T-cell (primary cell): ENCODE measurements at regions of chr12 and their contacts with region 1.

Region 1: DNA sequence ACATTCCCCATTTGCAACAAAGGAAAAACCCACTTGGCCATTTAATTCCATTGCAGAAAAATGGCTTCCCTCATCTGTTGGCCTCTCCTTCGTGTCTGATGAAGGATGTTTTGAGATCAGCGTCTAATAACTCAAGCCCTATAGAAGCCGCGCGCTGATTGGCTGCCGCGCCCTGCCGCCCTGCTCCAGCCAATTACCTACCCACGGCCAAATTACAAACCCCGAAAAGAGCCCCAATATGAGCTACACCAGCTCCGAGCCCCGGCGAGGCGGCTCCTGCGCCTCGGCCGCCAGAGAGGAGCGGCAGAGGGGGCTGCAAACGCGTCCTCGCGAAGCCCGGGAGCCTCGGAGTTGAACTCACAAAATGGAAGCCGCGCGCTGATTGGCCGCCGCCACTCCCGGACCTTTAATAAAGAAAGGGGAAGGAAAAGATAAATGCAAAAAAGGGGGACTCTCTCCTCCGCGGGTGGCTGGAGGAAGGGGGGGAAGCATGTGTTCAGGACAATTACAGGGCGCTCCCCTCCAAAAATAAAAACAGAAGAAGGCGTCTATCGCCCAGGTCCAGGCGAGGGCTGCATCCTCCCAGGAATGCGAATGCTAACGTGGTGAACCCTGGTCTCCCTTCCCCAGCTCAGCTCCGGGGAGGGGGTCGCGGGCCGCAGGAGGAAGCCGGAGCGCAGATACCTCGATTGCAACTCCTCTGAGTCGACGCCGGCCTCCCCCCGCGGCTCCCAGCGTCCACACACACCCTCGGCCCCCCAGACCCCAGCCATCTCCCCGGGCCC is 771 bp upstream of the SETD1B start:
- DNase-seq: peak; percentile 81 to 94 (median 87)
- ATAC-seq: peak; percentile 45 to 57 (median 52)
- H3K4me3 ChIP-seq: peak overlapping the region; percentile 92 to 97
- H3K4me3 Mint-ChIP-seq: peak overlapping the region; percentile 93 to 98 (median 96)
- H3K27ac ChIP-seq: peak overlapping the region; percentile 96
- H3K27ac Mint-ChIP-seq: peak overlapping the region; percentile 96 to 98
- H3K4me1 ChIP-seq: peaks cover 27 to 52% of the 10 kb centered on the region in 2 experiments
- H3K4me1 Mint-ChIP-seq: peaks cover 25 to 47% (median 40%) of the 10 kb centered on the region in 3 donors
- H3K27me3 ChIP-seq: no peaks in the 10 kb centered on the region
- H3K27me3 Mint-ChIP-seq: no peaks in the 10 kb centered on the region

Region 2: GRCh38 chr12:121038861-121039666 is 764.0 kb before region 1 on chr12 and contains the start of gene OASL:
- CTCF ChIA-PET with region 1: no interaction called
- POLR2A ChIA-PET with region 1: no interaction called
- DNase-seq: peak; percentile 23 to 77 (median 54)
- ATAC-seq: peak; percentile 66 to 78 (median 68)
- H3K4me3 ChIP-seq: peak within 1 kb of the TSS; percentile 83 to 90
- H3K4me3 Mint-ChIP-seq: peak within 1 kb of the TSS; percentile 93 to 98 (median 98)
- H3K27ac ChIP-seq: peak within 1 kb of the TSS; percentile 87
- H3K27ac Mint-ChIP-seq: peak within 1 kb of the TSS; percentile 94 to 96
- H3K4me1 ChIP-seq: peaks cover 7 to 56% of the 10 kb centered on the region in 2 experiments
- H3K4me1 Mint-ChIP-seq: peaks cover 44 to 51% (median 45%) of the 10 kb centered on the region in 3 donors
- H3K27me3 ChIP-seq: peaks cover 0 to 6% of the 10 kb centered on the region in 2 experiments
- H3K27me3 Mint-ChIP-seq: peaks cover 0 to 2% of the 10 kb centered on the region in 2 donors
- total RNA-seq, gene OASL: 6.0 to 17.6 (median 8.9) TPM

Region 3: GRCh38 chr12:121849665-121850064 is 46.6 kb after region 1 on chr12:
- CTCF ChIA-PET with region 1: no interaction called
- POLR2A ChIA-PET with region 1: interaction called in 1 of 2 experiments, 14 read pairs
- DNase-seq: no peak
- ATAC-seq: no peak
- H3K4me3 ChIP-seq: no peak overlapping the region
- H3K4me3 Mint-ChIP-seq: no peak overlapping the region
- H3K27ac ChIP-seq: no peak overlapping the region
- H3K27ac Mint-ChIP-seq: no peak overlapping the region
- H3K4me1 ChIP-seq: no peaks in the 10 kb centered on the region
- H3K4me1 Mint-ChIP-seq: no peaks in the 10 kb centered on the region
- H3K27me3 ChIP-seq: no peaks in the 10 kb centered on the region
- H3K27me3 Mint-ChIP-seq: no peaks in the 10 kb centered on the region